CD8-positive, alpha-beta T cell (primary cell): ENCODE measurements at regions of chr1 and their contacts with region 1.

Region 1: DNA sequence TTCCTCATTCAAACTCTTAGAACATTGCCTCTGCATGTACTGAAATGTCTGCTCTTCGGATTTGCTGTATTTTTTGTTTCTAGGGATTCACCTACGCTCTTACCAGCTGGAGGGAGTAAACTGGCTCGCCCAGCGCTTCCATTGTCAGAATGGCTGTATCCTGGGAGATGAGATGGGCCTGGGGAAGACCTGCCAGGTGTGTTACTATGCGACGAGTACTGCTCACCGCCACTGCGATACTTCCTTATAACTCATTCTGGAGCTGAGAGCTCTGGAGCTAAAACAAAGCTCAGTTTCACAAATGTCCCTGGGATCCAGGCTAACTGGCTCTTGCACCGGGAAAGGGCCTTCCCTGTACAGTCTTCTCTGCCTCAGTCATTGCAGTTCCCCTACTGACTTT is 10.1 kb downstream of the CHD1L start:
- DNase-seq: no peak
- ATAC-seq: no peak
- H3K4me3 ChIP-seq: no peak overlapping the region
- H3K4me3 Mint-ChIP-seq: no peak overlapping the region
- H3K27ac ChIP-seq: no peak overlapping the region
- H3K27ac Mint-ChIP-seq: no peak overlapping the region
- H3K4me1 ChIP-seq: peaks cover 4% of the 10 kb centered on the region
- H3K4me1 Mint-ChIP-seq: peaks cover 27% of the 10 kb centered on the region
- H3K27me3 ChIP-seq: no peaks in the 10 kb centered on the region
- H3K27me3 Mint-ChIP-seq: no peaks in the 10 kb centered on the region
- CTCF ChIP-seq: no peak

Region 2: GRCh38 chr1:147185441-147185840 is 67.1 kb before region 1 on chr1:
- CTCF ChIA-PET with region 1: no interaction called
- POLR2A ChIA-PET with region 1: no interaction called
- intact Hi-C with region 1: loop called in 1 of 2 experiments (anchors 2 kb)
- DNase-seq: no peak
- ATAC-seq: no peak
- H3K4me3 ChIP-seq: no peak overlapping the region
- H3K4me3 Mint-ChIP-seq: no peak overlapping the region
- H3K27ac ChIP-seq: no peak overlapping the region
- H3K27ac Mint-ChIP-seq: no peak overlapping the region
- H3K4me1 ChIP-seq: no peaks in the 10 kb centered on the region
- H3K4me1 Mint-ChIP-seq: no peaks in the 10 kb centered on the region
- H3K27me3 ChIP-seq: no peaks in the 10 kb centered on the region
- H3K27me3 Mint-ChIP-seq: no peaks in the 10 kb centered on the region
- CTCF ChIP-seq: no peak

Region 3: DNA sequence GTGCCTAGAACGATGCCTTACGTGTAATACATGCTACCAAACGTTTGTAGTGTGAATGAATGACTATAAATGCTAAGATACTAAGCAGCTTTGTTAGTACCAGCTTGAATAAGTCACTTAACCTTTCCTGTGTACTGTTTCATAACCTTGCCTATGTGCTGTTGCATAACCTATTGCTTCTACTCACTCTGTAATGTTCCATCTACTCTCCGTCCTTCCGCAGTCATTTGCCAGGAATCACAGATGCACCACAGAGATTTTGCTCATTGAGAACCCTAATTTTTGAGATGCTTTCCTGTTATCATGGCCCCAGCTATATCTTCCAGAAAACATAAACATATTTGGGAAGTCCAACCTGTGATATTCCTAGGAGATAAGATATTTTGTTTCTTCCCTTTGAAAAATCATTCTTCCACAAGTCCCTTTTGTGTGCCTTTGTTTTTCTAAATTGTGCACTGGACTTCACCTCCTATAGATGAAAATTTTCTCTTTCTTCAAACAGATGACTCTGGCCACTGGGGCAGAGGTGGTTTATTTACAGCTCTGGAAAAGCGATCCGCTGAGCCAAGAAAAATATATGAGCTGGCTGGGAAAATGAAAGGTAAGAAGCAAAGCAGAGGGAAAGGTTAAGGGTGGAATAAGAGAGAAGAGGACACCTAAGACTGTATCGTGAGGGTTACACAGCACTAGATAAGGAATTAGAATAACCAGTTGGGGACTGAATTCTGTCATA is 34.8 kb after region 1 on chr1:
- CTCF ChIA-PET with region 1: no interaction called
- POLR2A ChIA-PET with region 1: no interaction called
- intact Hi-C with region 1: no loop called
- DNase-seq: no peak
- ATAC-seq: no peak
- H3K4me3 ChIP-seq: no peak overlapping the region
- H3K4me3 Mint-ChIP-seq: no peak overlapping the region
- H3K27ac ChIP-seq: no peak overlapping the region
- H3K27ac Mint-ChIP-seq: no peak overlapping the region
- H3K4me1 ChIP-seq: no peaks in the 10 kb centered on the region
- H3K4me1 Mint-ChIP-seq: no peaks in the 10 kb centered on the region
- H3K27me3 ChIP-seq: no peaks in the 10 kb centered on the region
- H3K27me3 Mint-ChIP-seq: no peaks in the 10 kb centered on the region
- CTCF ChIP-seq: no peak